H1 (cell line): ENCODE measurements at regions of chr5 and their contacts with region 1.

Region 1: DNA sequence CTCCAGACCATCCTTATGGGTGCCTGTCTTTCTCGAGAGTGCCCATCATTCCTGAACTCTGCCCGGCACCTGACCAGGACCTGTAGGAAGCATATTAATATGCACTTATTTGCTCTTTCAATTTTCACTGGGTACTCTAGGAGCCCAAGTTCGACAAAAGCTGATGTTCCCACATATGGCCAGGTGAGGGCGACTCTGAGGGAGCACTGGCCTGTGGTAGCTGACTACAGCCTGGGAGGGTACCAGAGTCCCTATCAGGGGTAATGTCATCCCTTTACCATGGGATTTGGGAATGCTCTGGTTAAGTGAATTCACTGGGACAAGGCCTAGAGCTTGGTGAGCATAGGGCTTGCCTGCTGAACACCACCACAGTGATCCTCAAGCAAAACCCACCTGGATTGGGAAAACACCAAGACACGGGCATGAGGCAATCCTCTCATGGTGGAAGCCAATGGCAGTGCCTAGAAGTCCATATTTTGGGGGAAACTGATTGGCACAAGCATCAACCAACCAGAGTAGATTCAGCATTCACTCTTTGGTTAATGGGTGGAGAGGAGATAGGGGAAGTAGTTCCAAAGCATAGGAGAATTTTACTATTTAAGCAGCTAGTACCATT is 112.2 kb downstream of the MTX3 start:
- DNase-seq: peak; percentile 5 to 87
- H3K4me3 ChIP-seq: no peak overlapping the region
- H3K27ac ChIP-seq: no peak overlapping the region
- H3K4me1 ChIP-seq: no peaks in the 10 kb centered on the region
- H3K27me3 ChIP-seq: no peaks in the 10 kb centered on the region
- CTCF ChIP-seq: peak; percentile 80 to 91 (median 89)
- EP300 ChIP-seq: no peak
- POLR2A ChIP-seq: no peak
- RAD21 ChIP-seq: peak; percentile 74 to 82

Region 2: DNA sequence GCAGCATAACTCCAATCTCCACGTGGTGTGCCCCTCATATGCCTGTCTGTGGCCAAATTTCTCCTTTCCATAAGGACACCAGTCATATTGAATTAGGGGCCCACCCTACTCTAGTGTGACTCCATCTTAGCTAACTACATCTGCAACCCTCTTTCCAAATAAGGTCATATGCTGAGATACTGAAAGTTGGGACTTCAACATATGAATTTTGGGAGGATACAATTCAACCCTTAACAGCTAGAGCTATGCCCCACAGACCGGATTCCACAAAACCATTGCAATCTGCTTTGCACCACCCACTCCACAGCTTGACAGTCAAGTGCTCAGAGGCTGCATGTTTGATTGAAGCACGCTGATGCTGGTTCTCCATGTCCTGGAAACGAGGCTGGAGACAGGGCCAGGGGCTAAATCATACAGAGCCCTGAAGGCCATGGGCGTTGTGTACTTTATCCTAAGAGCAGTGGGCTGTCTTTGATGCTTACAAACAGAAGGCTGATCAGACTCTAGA is 10.6 kb before region 1 on chr5:
- CTCF ChIA-PET with region 1: interaction called, 12 read pairs
- POLR2A ChIA-PET with region 1: no interaction called
- DNase-seq: no peak
- H3K4me3 ChIP-seq: no peak overlapping the region
- H3K27ac ChIP-seq: no peak overlapping the region
- H3K4me1 ChIP-seq: no peaks in the 10 kb centered on the region
- H3K27me3 ChIP-seq: no peaks in the 10 kb centered on the region
- CTCF ChIP-seq: no peak
- EP300 ChIP-seq: no peak
- POLR2A ChIP-seq: no peak
- RAD21 ChIP-seq: no peak

Region 3: GRCh38 chr5:79955941-79956670 is 77.3 kb after region 1 on chr5:
- CTCF ChIA-PET with region 1: interaction called, 11 read pairs
- POLR2A ChIA-PET with region 1: no interaction called
- DNase-seq: no peak
- H3K4me3 ChIP-seq: no peak overlapping the region
- H3K27ac ChIP-seq: no peak overlapping the region
- H3K4me1 ChIP-seq: peaks cover 0 to 2% (median 0%) of the 10 kb centered on the region in 4 experiments; a peak in 2 of 7 replicates
- H3K27me3 ChIP-seq: no peaks in the 10 kb centered on the region
- CTCF ChIP-seq: no peak
- EP300 ChIP-seq: no peak
- POLR2A ChIP-seq: no peak
- RAD21 ChIP-seq: no peak

Region 4: DNA sequence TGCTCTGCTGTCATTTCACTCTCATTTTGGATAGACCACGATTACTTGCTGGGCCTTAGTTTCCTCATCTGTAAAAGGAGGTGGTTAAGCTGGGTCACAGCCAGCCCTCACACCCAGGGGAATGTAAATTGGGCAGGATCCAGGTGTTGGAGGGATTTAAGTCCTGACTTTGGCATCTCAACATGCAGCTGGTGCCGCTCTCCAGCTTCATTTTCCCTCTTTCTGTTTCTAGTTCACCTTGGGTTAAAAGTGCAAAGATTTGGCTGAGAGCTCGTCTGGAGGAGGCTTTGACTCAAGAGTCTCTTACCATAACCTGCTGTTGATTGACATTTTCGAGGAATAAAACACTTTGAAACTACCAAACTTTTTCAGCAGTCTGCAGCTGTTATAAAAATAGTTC is 920.2 kb after region 1 on chr5:
- CTCF ChIA-PET with region 1: no interaction called
- POLR2A ChIA-PET with region 1: no interaction called
- DNase-seq: no peak
- H3K4me3 ChIP-seq: no peak overlapping the region
- H3K27ac ChIP-seq: no peak overlapping the region
- H3K4me1 ChIP-seq: no peaks in the 10 kb centered on the region
- H3K27me3 ChIP-seq: no peaks in the 10 kb centered on the region
- CTCF ChIP-seq: no peak
- EP300 ChIP-seq: no peak
- POLR2A ChIP-seq: no peak
- RAD21 ChIP-seq: no peak